Naive thymus-derived CD4-positive, alpha-beta T cell (primary cell): ENCODE measurements at regions of chr6 and their contacts with region 1.

Region 1: GRCh38 chr6:26216356-26216885 is 129.2 kb downstream of the HFE start:
- DNase-seq: peak; percentile 56 to 97 (median 93)
- ATAC-seq: peak; percentile 86
- H3K4me3 ChIP-seq: peak overlapping the region; percentile 72
- H3K4me3 Mint-ChIP-seq: no peak overlapping the region
- H3K27ac ChIP-seq: peak overlapping the region; percentile 84
- H3K27ac Mint-ChIP-seq: no peak overlapping the region
- H3K4me1 ChIP-seq: peaks cover 12 to 18% of the 10 kb centered on the region in 2 donors
- H3K4me1 Mint-ChIP-seq: peaks cover 3 to 31% (median 10%) of the 10 kb centered on the region in 7 donors
- H3K27me3 ChIP-seq: no peaks in the 10 kb centered on the region
- H3K27me3 Mint-ChIP-seq: no peaks in the 10 kb centered on the region

Region 2: GRCh38 chr6:26031595-26032339 is 184.7 kb before region 1 on chr6:
- CTCF ChIA-PET with region 1: interaction called, 4 read pairs
- POLR2A ChIA-PET with region 1: interaction called, 48 read pairs
- intact Hi-C with region 1: no loop called
- DNase-seq: peak; percentile 56 to 94 (median 90)
- ATAC-seq: peak; percentile 79
- H3K4me3 ChIP-seq: peak overlapping the region; percentile 70
- H3K4me3 Mint-ChIP-seq: peak overlapping the region; percentile 89 to 98 (median 96)
- H3K27ac ChIP-seq: peak overlapping the region; percentile 69
- H3K27ac Mint-ChIP-seq: peak overlapping the region; percentile 93 to 98 (median 96)
- H3K4me1 ChIP-seq: peaks cover 23 to 31% of the 10 kb centered on the region in 2 donors
- H3K4me1 Mint-ChIP-seq: peaks cover 14 to 69% (median 43%) of the 10 kb centered on the region in 7 donors
- H3K27me3 ChIP-seq: no peaks in the 10 kb centered on the region
- H3K27me3 Mint-ChIP-seq: peaks cover 0 to 7% (median 0%) of the 10 kb centered on the region in 5 donors

Region 3: GRCh38 chr6:26122793-26123674 is 93.4 kb before region 1 on chr6:
- CTCF ChIA-PET with region 1: interaction called, 4 read pairs
- POLR2A ChIA-PET with region 1: interaction called, 215 read pairs
- intact Hi-C with region 1: loop called (anchors 1 kb)
- DNase-seq: peak; percentile 68 to 99 (median 96)
- ATAC-seq: peak; percentile 78
- H3K4me3 ChIP-seq: peak overlapping the region; percentile 94
- H3K4me3 Mint-ChIP-seq: peak overlapping the region; percentile 92 to 100 (median 98)
- H3K27ac ChIP-seq: peak overlapping the region; percentile 86
- H3K27ac Mint-ChIP-seq: peak overlapping the region; percentile 97 to 100 (median 99)
- H3K4me1 ChIP-seq: peaks cover 18 to 23% of the 10 kb centered on the region in 2 donors
- H3K4me1 Mint-ChIP-seq: peaks cover 22 to 54% (median 30%) of the 10 kb centered on the region in 7 donors
- H3K27me3 ChIP-seq: no peaks in the 10 kb centered on the region
- H3K27me3 Mint-ChIP-seq: peaks cover 0 to 21% (median 0%) of the 10 kb centered on the region in 5 donors

Region 4: GRCh38 chr6:26204332-26205165 is 11.9 kb before region 1 on chr6:
- CTCF ChIA-PET with region 1: interaction called, 18 read pairs
- POLR2A ChIA-PET with region 1: interaction called, 3,606 read pairs
- intact Hi-C with region 1: loop called (anchors 1 kb)
- DNase-seq: peak; percentile 67 to 95 (median 89)
- ATAC-seq: peak; percentile 72
- H3K4me3 ChIP-seq: peak overlapping the region; percentile 77
- H3K4me3 Mint-ChIP-seq: no peak overlapping the region
- H3K27ac ChIP-seq: peak overlapping the region; percentile 90
- H3K27ac Mint-ChIP-seq: no peak overlapping the region
- H3K4me1 ChIP-seq: peaks cover 20 to 23% of the 10 kb centered on the region in 2 donors
- H3K4me1 Mint-ChIP-seq: peaks cover 9 to 36% (median 26%) of the 10 kb centered on the region in 7 donors
- H3K27me3 ChIP-seq: no peaks in the 10 kb centered on the region
- H3K27me3 Mint-ChIP-seq: peaks cover 0 to 5% (median 0%) of the 10 kb centered on the region in 5 donors

Region 5: GRCh38 chr6:26258200-26258977 is 42.0 kb after region 1 on chr6:
- CTCF ChIA-PET with region 1: no interaction called
- POLR2A ChIA-PET with region 1: interaction called, 12 read pairs
- intact Hi-C with region 1: no loop called
- DNase-seq: no peak
- ATAC-seq: no peak
- H3K4me3 ChIP-seq: no peak overlapping the region
- H3K4me3 Mint-ChIP-seq: no peak overlapping the region
- H3K27ac ChIP-seq: no peak overlapping the region
- H3K27ac Mint-ChIP-seq: no peak overlapping the region
- H3K4me1 ChIP-seq: peaks cover 0 to 3% of the 10 kb centered on the region in 2 donors
- H3K4me1 Mint-ChIP-seq: peaks cover 6 to 23% (median 11%) of the 10 kb centered on the region in 7 donors
- H3K27me3 ChIP-seq: no peaks in the 10 kb centered on the region
- H3K27me3 Mint-ChIP-seq: no peaks in the 10 kb centered on the region

Region 6: DNA sequence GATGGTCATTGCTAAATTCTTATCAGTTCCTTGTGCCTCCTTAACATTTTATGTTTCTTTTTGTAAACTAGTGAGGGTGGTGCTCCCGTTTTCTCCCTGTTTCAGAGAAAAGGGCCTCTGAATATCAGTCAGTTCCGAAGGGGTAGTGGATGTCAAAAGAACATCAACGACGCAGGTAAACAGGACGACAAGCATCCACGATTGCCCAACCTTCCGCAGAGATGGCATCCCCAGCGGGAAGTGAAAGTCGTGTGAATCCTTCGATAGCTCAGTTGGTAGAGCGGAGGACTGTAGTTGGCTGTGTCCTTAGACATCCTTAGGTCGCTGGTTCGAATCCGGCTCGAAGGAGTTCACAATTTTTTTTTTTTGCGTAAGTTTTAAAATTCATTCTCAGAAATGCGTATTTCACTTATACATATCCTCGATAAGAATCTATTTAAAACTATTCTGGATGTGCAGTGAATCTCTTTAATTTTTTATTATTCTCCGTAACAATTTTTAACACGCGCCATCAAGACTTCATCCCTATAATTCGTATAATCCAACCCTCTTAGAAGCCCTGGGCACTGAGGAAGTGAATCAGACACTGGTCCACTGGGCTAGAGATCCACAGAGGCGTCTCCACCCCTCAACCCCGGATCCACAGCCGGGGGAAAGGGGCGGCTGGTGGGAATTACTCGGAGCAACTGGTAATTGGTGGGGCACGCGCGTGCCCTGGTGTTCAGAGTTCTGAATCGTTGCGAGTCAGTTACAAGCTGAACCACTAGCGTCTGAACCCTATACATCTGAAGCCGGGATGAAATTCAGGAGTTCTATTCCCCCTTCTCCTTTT is 352.4 kb after region 1 on chr6:
- CTCF ChIA-PET with region 1: interaction called, 3 read pairs
- POLR2A ChIA-PET with region 1: interaction called, 21 read pairs
- intact Hi-C with region 1: no loop called
- DNase-seq: peak; percentile 96 to 99 (median 98)
- ATAC-seq: peak; percentile 84
- H3K4me3 ChIP-seq: peak overlapping the region; percentile 90
- H3K4me3 Mint-ChIP-seq: peak overlapping the region; percentile 90 to 100 (median 95)
- H3K27ac ChIP-seq: peak overlapping the region; percentile 74
- H3K27ac Mint-ChIP-seq: peak overlapping the region; percentile 96 to 100 (median 99)
- H3K4me1 ChIP-seq: peaks cover 0 to 3% of the 10 kb centered on the region in 2 donors
- H3K4me1 Mint-ChIP-seq: peaks cover 11 to 42% (median 26%) of the 10 kb centered on the region in 7 donors
- H3K27me3 ChIP-seq: no peaks in the 10 kb centered on the region
- H3K27me3 Mint-ChIP-seq: peaks cover 0 to 12% (median 0%) of the 10 kb centered on the region in 5 donors

Region 7: GRCh38 chr6:27825025-27825793 is 1608.8 kb after region 1 on chr6:
- CTCF ChIA-PET with region 1: no interaction called
- POLR2A ChIA-PET with region 1: interaction called, 16 read pairs
- intact Hi-C with region 1: no loop called
- DNase-seq: no peak
- ATAC-seq: no peak
- H3K4me3 ChIP-seq: peak overlapping the region; percentile 87
- H3K4me3 Mint-ChIP-seq: peak overlapping the region; percentile 82 to 99 (median 94)
- H3K27ac ChIP-seq: peak overlapping the region; percentile 89
- H3K27ac Mint-ChIP-seq: peak overlapping the region; percentile 90 to 100 (median 98)
- H3K4me1 ChIP-seq: peaks cover 6% of the 10 kb centered on the region in 2 donors
- H3K4me1 Mint-ChIP-seq: peaks cover 11 to 50% (median 33%) of the 10 kb centered on the region in 7 donors
- H3K27me3 ChIP-seq: no peaks in the 10 kb centered on the region
- H3K27me3 Mint-ChIP-seq: peaks cover 0 to 4% (median 0%) of the 10 kb centered on the region in 5 donors